Naive thymus-derived CD4-positive, alpha-beta T cell (primary cell): ENCODE measurements at regions of chr14 and their contacts with region 1.

Region 1: DNA sequence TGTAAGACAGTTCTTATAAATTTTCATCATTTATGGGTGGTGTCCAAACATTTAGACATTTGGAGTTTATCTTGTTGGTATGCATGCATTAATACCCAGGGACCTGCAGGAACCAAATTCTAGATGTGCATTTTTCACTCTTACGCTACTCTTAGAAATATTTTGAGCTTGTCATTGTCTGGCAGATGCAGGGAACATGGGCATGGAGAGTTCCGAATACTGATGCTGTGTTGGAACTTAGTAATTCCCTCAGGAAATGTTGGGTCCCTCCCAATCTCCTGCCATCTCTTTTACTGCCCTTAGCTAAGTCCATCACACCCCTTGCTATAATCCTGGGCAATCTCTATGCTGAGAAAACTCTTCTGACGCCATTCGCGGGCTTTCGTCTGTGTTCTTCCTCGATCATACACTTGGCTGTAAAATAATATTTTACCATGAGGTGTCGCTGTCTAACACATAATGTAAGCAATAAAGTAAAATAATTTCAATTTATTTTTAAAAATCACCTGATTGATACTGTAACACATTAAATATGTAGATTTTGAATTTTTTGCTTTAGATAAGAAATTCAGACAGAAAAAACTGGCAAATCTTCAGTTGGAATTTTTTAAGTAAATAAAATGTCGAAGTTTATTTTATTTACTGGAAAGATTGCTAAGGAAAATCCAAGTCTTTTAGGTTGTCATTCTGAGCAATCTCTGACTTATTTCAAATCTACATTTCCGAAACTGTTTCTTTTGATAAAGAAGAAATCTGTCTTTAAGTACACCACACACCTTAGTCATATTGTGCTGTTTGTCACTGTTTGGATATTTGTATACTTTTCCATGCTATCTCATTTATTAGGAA is 304.1 kb upstream of the SSTR1 start:
- DNase-seq: peak in 7 of 9 donors; percentile 21 to 49 (median 41)
- ATAC-seq: no peak
- H3K4me3 ChIP-seq: no peak overlapping the region
- H3K4me3 Mint-ChIP-seq: no peak overlapping the region
- H3K27ac ChIP-seq: no peak overlapping the region
- H3K27ac Mint-ChIP-seq: no peak overlapping the region
- H3K4me1 ChIP-seq: no peaks in the 10 kb centered on the region
- H3K4me1 Mint-ChIP-seq: peaks cover 0 to 4% (median 2%) of the 10 kb centered on the region in 7 donors
- H3K27me3 ChIP-seq: peaks cover 0 to 4% of the 10 kb centered on the region in 2 donors
- H3K27me3 Mint-ChIP-seq: peaks cover 8 to 36% (median 12%) of the 10 kb centered on the region in 5 donors

Region 2: DNA sequence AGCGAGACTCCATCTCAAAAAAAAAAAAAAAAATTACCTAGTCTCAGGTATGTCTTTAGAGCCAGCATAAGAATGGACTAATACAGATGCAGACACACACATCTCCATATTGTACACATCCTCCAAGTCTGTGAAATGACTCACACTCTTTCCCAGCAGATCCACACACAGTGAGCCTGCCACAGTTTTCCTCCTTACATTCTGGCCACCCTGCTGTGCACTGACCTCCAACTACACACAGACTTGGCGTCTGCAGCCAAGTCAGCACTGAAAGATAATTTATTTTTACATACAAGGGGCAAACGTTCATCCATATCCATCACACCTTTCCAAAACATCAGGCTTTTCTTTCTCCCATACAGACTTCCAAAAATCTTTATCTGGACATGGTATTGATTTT is 847.1 kb before region 1 on chr14:
- CTCF ChIA-PET with region 1: no interaction called
- POLR2A ChIA-PET with region 1: no interaction called
- intact Hi-C with region 1: no loop called
- DNase-seq: no peak
- ATAC-seq: no peak
- H3K4me3 ChIP-seq: no peak overlapping the region
- H3K4me3 Mint-ChIP-seq: no peak overlapping the region
- H3K27ac ChIP-seq: no peak overlapping the region
- H3K27ac Mint-ChIP-seq: no peak overlapping the region
- H3K4me1 ChIP-seq: no peaks in the 10 kb centered on the region
- H3K4me1 Mint-ChIP-seq: no peaks in the 10 kb centered on the region
- H3K27me3 ChIP-seq: no peaks in the 10 kb centered on the region
- H3K27me3 Mint-ChIP-seq: no peaks in the 10 kb centered on the region

Region 3: DNA sequence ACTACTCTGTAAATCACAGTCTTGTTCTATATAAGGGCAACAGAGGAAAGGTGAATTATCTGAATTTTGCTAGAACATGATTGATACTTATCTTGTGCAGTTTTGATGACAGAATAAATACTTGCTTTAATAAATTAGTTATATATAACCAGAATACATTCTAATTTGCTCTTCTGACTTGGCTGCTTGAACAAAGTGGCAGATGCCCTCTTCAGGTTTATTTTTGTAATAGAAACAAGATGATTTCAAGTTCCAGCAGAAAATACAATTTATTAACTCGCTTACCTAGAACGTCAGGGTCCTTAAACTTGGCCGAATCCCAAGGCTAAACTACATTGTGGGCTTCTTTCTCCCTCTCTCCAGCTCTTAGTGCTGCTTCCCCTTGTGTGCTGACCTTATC is 246.5 kb after region 1 on chr14:
- CTCF ChIA-PET with region 1: no interaction called
- POLR2A ChIA-PET with region 1: no interaction called
- intact Hi-C with region 1: loop called in 1 of 2 experiments (anchors 1 kb)
- DNase-seq: peak in 1 of 9 donors; percentile 5
- ATAC-seq: no peak
- H3K4me3 ChIP-seq: no peak overlapping the region
- H3K4me3 Mint-ChIP-seq: no peak overlapping the region
- H3K27ac ChIP-seq: no peak overlapping the region
- H3K27ac Mint-ChIP-seq: peak overlapping the region in 1 of 9 donors; percentile 73
- H3K4me1 ChIP-seq: no peaks in the 10 kb centered on the region
- H3K4me1 Mint-ChIP-seq: peaks cover 0 to 9% (median 0%) of the 10 kb centered on the region in 7 donors
- H3K27me3 ChIP-seq: no peaks in the 10 kb centered on the region
- H3K27me3 Mint-ChIP-seq: no peaks in the 10 kb centered on the region

Region 4: DNA sequence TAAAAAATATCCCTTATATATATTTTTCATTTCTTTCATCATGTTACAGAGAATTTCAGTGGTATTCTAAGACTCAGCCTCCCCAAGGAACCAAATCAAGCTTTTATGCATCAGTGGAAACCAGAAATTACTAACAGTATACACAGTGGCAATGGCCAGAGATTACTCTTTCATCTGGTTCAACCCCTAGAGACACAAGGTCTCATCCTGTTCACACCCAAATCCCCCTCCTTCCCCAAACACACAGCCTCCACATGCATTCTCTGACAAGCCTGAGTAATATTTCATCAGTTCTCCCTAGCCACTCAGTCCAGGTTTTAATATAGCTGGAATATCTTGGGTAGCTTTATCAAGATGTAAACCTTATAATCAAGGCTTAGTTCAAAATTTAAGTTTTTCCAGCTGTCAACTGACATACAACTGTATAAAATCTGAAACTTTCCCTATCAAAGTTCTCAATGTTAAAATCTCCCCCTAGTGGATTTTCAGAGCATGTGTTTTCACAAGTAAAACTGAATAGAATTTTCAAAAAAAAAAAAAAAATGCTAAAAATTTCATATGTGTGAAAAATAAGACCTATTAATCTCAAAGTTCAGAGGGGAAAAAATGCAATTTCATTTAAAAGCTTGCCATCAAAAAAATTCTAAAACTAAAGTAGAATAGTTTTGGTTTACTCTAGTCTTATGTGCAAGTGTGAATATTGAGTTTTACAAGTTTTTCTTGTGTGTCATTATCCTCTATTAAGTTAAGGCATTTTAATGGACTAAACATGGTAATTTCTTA is 293.6 kb after region 1 on chr14:
- CTCF ChIA-PET with region 1: interaction called, 10 read pairs
- POLR2A ChIA-PET with region 1: no interaction called
- intact Hi-C with region 1: loop called (anchors 1 to 2 kb)
- DNase-seq: peak in 5 of 9 donors; percentile 23 to 49 (median 35)
- ATAC-seq: no peak
- H3K4me3 ChIP-seq: no peak overlapping the region
- H3K4me3 Mint-ChIP-seq: no peak overlapping the region
- H3K27ac ChIP-seq: no peak overlapping the region
- H3K27ac Mint-ChIP-seq: peak overlapping the region in 1 of 9 donors; percentile 60
- H3K4me1 ChIP-seq: peaks cover 0 to 4% of the 10 kb centered on the region in 2 donors
- H3K4me1 Mint-ChIP-seq: peaks cover 0 to 8% (median 5%) of the 10 kb centered on the region in 7 donors
- H3K27me3 ChIP-seq: no peaks in the 10 kb centered on the region
- H3K27me3 Mint-ChIP-seq: peaks cover 0 to 2% (median 0%) of the 10 kb centered on the region in 5 donors

Region 5: DNA sequence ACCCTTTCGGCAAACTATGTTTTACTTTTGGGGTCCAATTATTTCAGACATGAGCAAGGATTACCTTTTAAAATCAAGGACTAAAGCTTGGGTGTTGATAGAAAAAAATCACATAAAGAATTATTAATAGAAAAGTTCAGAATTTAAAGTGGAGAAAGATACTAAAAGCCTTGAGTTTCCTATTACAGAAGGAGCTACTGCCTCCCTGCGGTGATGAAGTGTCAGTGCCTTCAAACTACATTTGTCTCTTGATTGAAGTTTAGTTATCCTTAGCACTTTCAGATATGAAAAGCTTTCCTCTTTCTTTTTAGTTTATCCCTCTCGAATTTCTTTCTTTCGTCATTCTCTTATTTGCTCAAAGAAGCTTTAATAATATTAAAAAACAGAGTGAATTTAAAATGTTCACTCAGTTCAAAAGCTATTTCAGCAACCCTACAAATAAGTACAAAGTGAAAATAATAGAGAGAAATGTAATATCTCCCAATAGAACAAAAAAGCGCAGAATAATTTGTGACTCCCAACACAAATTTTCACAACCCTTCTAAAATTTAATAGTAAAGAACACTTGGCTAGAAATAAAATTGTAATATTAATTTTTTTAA is 1111.9 kb after region 1 on chr14:
- CTCF ChIA-PET with region 1: interaction called, 5 read pairs
- POLR2A ChIA-PET with region 1: no interaction called
- intact Hi-C with region 1: loop called (anchors 1 to 10 kb)
- DNase-seq: peak in 5 of 9 donors; percentile 3 to 15 (median 13)
- ATAC-seq: peak; percentile 45
- H3K4me3 ChIP-seq: no peak overlapping the region
- H3K4me3 Mint-ChIP-seq: no peak overlapping the region
- H3K27ac ChIP-seq: no peak overlapping the region
- H3K27ac Mint-ChIP-seq: no peak overlapping the region
- H3K4me1 ChIP-seq: no peaks in the 10 kb centered on the region
- H3K4me1 Mint-ChIP-seq: peaks cover 0 to 3% (median 0%) of the 10 kb centered on the region in 7 donors
- H3K27me3 ChIP-seq: no peaks in the 10 kb centered on the region
- H3K27me3 Mint-ChIP-seq: no peaks in the 10 kb centered on the region